ENCODE measurements at regions of chr2 and their contacts with region 1.

Region 1: GRCh38 chr2:207746131-207746530 is 23.6 kb downstream of the FZD5 start:
- DNase-seq: peak; percentile 56 to 88
- H3K4me3 ChIP-seq: no peak overlapping the region
- H3K27ac ChIP-seq: no peak overlapping the region
- H3K4me1 ChIP-seq: peaks cover 0 to 45% (median 23%) of the 10 kb centered on the region in 4 donors
- H3K27me3 ChIP-seq: no peaks in the 10 kb centered on the region
- CTCF ChIP-seq: peak in 5 of 7 experiments; percentile 67 to 84 (median 80)
- EP300 ChIP-seq: no peak
- POLR2A ChIP-seq: no peak

Region 2: GRCh38 chr2:207974216-207974605 is 228.1 kb after region 1 on chr2:
- intact Hi-C with region 1: loop called (anchors 10 kb)
- DNase-seq: no peak
- H3K4me3 ChIP-seq: no peak overlapping the region
- H3K27ac ChIP-seq: no peak overlapping the region
- H3K4me1 ChIP-seq: peaks cover 9 to 21% (median 15%) of the 10 kb centered on the region in 4 donors
- H3K27me3 ChIP-seq: no peaks in the 10 kb centered on the region
- CTCF ChIP-seq: no peak
- EP300 ChIP-seq: no peak
- POLR2A ChIP-seq: no peak

Region 3: DNA sequence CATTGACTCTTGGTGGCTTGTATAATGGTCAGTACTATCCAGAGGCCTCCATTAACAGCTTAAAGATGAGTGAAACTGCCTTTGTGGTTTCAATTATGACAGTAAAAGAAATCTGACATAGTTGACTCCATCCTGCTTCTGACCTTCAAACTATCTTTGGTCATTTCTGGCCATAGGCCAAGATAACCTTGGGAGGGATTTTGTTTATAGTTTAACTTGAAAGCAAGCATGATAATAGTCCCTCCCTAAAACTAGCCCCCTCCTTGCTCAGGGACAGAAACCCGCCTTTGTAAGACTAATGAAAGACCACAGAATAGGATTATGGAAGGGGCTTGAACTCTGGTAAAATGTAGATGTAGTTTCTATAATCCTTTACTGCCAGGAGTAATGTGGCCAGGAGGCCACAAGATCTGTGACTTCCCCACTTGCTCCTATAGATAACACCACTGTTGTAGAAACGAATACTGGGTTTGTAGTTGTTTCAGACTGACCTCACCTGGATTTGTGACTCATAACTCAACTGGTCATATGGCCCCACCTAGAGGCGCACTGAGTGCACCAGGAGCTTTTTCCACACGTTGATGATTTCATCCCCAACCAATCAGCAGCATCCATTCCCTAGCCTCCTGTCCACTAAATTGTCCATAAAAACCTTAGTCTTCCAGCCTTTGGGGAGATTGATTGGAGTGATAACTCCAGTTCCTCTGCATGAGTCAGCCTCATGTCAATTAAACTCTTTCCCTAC is 287.8 kb after region 1 on chr2:
- intact Hi-C with region 1: loop called (anchors 10 kb)
- DNase-seq: peak; percentile 66 to 86
- H3K4me3 ChIP-seq: no peak overlapping the region
- H3K27ac ChIP-seq: no peak overlapping the region
- H3K4me1 ChIP-seq: no peaks in the 10 kb centered on the region
- H3K27me3 ChIP-seq: no peaks in the 10 kb centered on the region
- CTCF ChIP-seq: peak in 5 of 7 experiments; percentile 25 to 64 (median 46)
- EP300 ChIP-seq: no peak
- POLR2A ChIP-seq: no peak

Region 4: GRCh38 chr2:209062210-209062609 is 1316.1 kb after region 1 on chr2:
- intact Hi-C with region 1: no loop called
- DNase-seq: no peak
- H3K4me3 ChIP-seq: no peak overlapping the region
- H3K27ac ChIP-seq: no peak overlapping the region
- H3K4me1 ChIP-seq: no peaks in the 10 kb centered on the region
- H3K27me3 ChIP-seq: no peaks in the 10 kb centered on the region
- CTCF ChIP-seq: no peak
- EP300 ChIP-seq: no peak
- POLR2A ChIP-seq: no peak

Measured in stomach (tissue), 19 donors.